Naive thymus-derived CD4-positive, alpha-beta T cell (primary cell): ENCODE measurements at regions of chr3 and their contacts with region 1.

Region 1: GRCh38 chr3:42012935-42013690 is 51.2 kb upstream of the ULK4 start:
- DNase-seq: peak; percentile 36 to 65 (median 58)
- ATAC-seq: peak; percentile 88
- H3K4me3 ChIP-seq: peak overlapping the region; percentile 78
- H3K4me3 Mint-ChIP-seq: peak overlapping the region; percentile 86 to 95 (median 90)
- H3K27ac ChIP-seq: peak overlapping the region; percentile 78
- H3K27ac Mint-ChIP-seq: peak overlapping the region; percentile 84 to 98 (median 93)
- H3K4me1 ChIP-seq: peaks cover 10 to 15% of the 10 kb centered on the region in 2 donors
- H3K4me1 Mint-ChIP-seq: peaks cover 19 to 39% (median 37%) of the 10 kb centered on the region in 7 donors
- H3K27me3 ChIP-seq: no peaks in the 10 kb centered on the region
- H3K27me3 Mint-ChIP-seq: no peaks in the 10 kb centered on the region

Region 2: GRCh38 chr3:40524568-40525285 is 1488.4 kb before region 1 on chr3 and contains the start of gene ZNF621:
- CTCF ChIA-PET with region 1: no interaction called
- POLR2A ChIA-PET with region 1: no interaction called
- intact Hi-C with region 1: loop called in 1 of 2 experiments (anchors 10 kb)
- DNase-seq: peak; percentile 43 to 90 (median 73)
- ATAC-seq: peak; percentile 99
- H3K4me3 ChIP-seq: peak within 1 kb of the TSS; percentile 69
- H3K4me3 Mint-ChIP-seq: peak within 1 kb of the TSS; percentile 85 to 97 (median 96)
- H3K27ac ChIP-seq: peak within 1 kb of the TSS; percentile 81
- H3K27ac Mint-ChIP-seq: peak within 1 kb of the TSS; percentile 91 to 98 (median 97)
- H3K4me1 ChIP-seq: peaks cover 0 to 15% of the 10 kb centered on the region in 2 donors
- H3K4me1 Mint-ChIP-seq: peaks cover 17 to 39% (median 27%) of the 10 kb centered on the region in 7 donors
- H3K27me3 ChIP-seq: no peaks in the 10 kb centered on the region
- H3K27me3 Mint-ChIP-seq: no peaks in the 10 kb centered on the region
- total RNA-seq, gene ZNF621: 14.6 to 26.9 (median 21.9) TPM

Region 3: DNA sequence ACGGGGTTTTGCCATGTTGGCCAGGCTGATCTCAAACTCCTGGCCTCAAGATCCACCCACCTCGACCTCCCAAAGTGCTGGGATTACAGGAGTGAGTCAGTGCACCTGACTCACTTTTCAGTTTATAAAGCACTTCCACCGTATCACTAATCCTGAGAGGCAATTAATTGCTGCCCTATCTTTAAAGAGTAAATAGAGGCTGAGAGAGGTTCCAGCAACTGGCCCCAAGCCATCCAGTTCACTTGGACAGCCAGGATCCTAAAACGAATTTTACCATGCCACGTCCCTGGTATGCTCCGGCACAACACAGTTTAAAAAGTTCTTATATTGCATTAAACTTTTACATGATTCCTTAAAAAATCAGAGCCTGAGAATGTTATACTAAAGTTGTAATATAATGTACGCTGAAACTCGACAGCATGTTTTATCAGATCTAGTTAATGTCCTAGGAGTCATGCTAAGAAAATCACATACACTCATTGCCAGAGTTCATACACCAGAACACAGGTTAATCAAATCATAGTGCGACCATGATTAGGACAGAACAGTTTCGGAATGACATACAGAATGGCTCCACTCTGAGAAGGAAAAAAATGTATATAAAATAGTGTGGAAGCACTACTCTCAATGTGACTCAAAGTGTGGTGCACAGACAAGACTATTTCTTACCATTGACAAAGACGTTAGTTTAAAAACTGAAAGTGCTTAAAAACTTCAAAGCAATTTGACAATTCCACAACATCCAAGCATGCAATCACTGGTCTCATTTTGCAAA is 176.6 kb before region 1 on chr3:
- CTCF ChIA-PET with region 1: no interaction called
- POLR2A ChIA-PET with region 1: no interaction called
- intact Hi-C with region 1: no loop called
- DNase-seq: no peak
- ATAC-seq: no peak
- H3K4me3 ChIP-seq: no peak overlapping the region
- H3K4me3 Mint-ChIP-seq: no peak overlapping the region
- H3K27ac ChIP-seq: no peak overlapping the region
- H3K27ac Mint-ChIP-seq: no peak overlapping the region
- H3K4me1 ChIP-seq: no peaks in the 10 kb centered on the region
- H3K4me1 Mint-ChIP-seq: peaks cover 0 to 11% (median 0%) of the 10 kb centered on the region in 7 donors
- H3K27me3 ChIP-seq: no peaks in the 10 kb centered on the region
- H3K27me3 Mint-ChIP-seq: no peaks in the 10 kb centered on the region

Region 4: GRCh38 chr3:41893977-41894376 is 119.1 kb before region 1 on chr3:
- CTCF ChIA-PET with region 1: no interaction called
- POLR2A ChIA-PET with region 1: no interaction called
- intact Hi-C with region 1: loop called in 1 of 2 experiments (anchors 10 kb)
- DNase-seq: peak in 6 of 9 donors; percentile 9 to 34 (median 17)
- ATAC-seq: no peak
- H3K4me3 ChIP-seq: no peak overlapping the region
- H3K4me3 Mint-ChIP-seq: no peak overlapping the region
- H3K27ac ChIP-seq: no peak overlapping the region
- H3K27ac Mint-ChIP-seq: no peak overlapping the region
- H3K4me1 ChIP-seq: no peaks in the 10 kb centered on the region
- H3K4me1 Mint-ChIP-seq: peaks cover 0 to 6% (median 0%) of the 10 kb centered on the region in 7 donors
- H3K27me3 ChIP-seq: no peaks in the 10 kb centered on the region
- H3K27me3 Mint-ChIP-seq: no peaks in the 10 kb centered on the region

Region 5: GRCh38 chr3:42080452-42080891 is 67.4 kb after region 1 on chr3:
- CTCF ChIA-PET with region 1: no interaction called
- POLR2A ChIA-PET with region 1: no interaction called
- intact Hi-C with region 1: loop called in 1 of 2 experiments (anchors 5 kb)
- DNase-seq: no peak
- ATAC-seq: peak; percentile 58
- H3K4me3 ChIP-seq: no peak overlapping the region
- H3K4me3 Mint-ChIP-seq: peak overlapping the region in 2 of 10 donors; percentile 9 to 61
- H3K27ac ChIP-seq: no peak overlapping the region
- H3K27ac Mint-ChIP-seq: peak overlapping the region in 5 of 9 donors; percentile 40 to 75 (median 66)
- H3K4me1 ChIP-seq: peaks cover 13 to 16% of the 10 kb centered on the region in 2 donors
- H3K4me1 Mint-ChIP-seq: peaks cover 38 to 60% (median 43%) of the 10 kb centered on the region in 7 donors
- H3K27me3 ChIP-seq: no peaks in the 10 kb centered on the region
- H3K27me3 Mint-ChIP-seq: no peaks in the 10 kb centered on the region

Region 6: DNA sequence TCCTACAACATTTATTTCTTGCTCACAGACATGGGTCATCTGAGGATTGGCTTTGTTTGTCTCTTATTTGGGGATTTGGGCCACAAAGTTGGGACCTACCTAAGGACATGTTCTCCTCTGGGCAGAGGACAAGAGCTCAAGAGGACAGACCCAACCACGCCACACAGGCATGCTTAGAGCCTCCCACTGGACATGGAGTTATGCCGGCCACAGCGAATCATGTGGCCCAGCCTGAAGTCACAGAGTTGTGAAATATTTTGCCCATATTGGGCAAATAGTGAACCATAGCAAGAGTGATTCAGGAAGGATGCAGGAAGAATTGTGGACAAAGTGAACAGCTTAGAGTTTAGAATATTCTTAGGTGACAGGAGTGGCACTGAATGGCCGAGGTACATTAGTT is 87.9 kb after region 1 on chr3:
- CTCF ChIA-PET with region 1: interaction called, 3 read pairs
- POLR2A ChIA-PET with region 1: no interaction called
- intact Hi-C with region 1: loop called (anchors 1 to 5 kb)
- DNase-seq: no peak
- ATAC-seq: peak; percentile 46
- H3K4me3 ChIP-seq: no peak overlapping the region
- H3K4me3 Mint-ChIP-seq: no peak overlapping the region
- H3K27ac ChIP-seq: no peak overlapping the region
- H3K27ac Mint-ChIP-seq: no peak overlapping the region
- H3K4me1 ChIP-seq: no peaks in the 10 kb centered on the region
- H3K4me1 Mint-ChIP-seq: peaks cover 0 to 23% (median 10%) of the 10 kb centered on the region in 7 donors
- H3K27me3 ChIP-seq: no peaks in the 10 kb centered on the region
- H3K27me3 Mint-ChIP-seq: no peaks in the 10 kb centered on the region

Region 7: GRCh38 chr3:42600111-42600988 is 587.2 kb after region 1 on chr3 and contains the start of gene NKTR:
- CTCF ChIA-PET with region 1: no interaction called
- POLR2A ChIA-PET with region 1: interaction called, 4 read pairs
- intact Hi-C with region 1: loop called in 1 of 2 experiments (anchors 5 kb)
- DNase-seq: peak; percentile 98 to 100 (median 100)
- ATAC-seq: peak; percentile 97
- H3K4me3 ChIP-seq: peak within 1 kb of the TSS; percentile 75
- H3K4me3 Mint-ChIP-seq: peak within 1 kb of the TSS; percentile 91 to 98 (median 95)
- H3K27ac ChIP-seq: peak within 1 kb of the TSS; percentile 93
- H3K27ac Mint-ChIP-seq: peak within 1 kb of the TSS; percentile 95 to 99 (median 98)
- H3K4me1 ChIP-seq: peaks cover 11 to 25% of the 10 kb centered on the region in 2 donors
- H3K4me1 Mint-ChIP-seq: peaks cover 26 to 53% (median 43%) of the 10 kb centered on the region in 7 donors
- H3K27me3 ChIP-seq: no peaks in the 10 kb centered on the region
- H3K27me3 Mint-ChIP-seq: peaks cover 0 to 2% (median 0%) of the 10 kb centered on the region in 5 donors
- total RNA-seq, gene NKTR: 110 to 275 (median 238) TPM